ENCODE measurements at regions of chr11 and their contacts with region 1.

Region 1: DNA sequence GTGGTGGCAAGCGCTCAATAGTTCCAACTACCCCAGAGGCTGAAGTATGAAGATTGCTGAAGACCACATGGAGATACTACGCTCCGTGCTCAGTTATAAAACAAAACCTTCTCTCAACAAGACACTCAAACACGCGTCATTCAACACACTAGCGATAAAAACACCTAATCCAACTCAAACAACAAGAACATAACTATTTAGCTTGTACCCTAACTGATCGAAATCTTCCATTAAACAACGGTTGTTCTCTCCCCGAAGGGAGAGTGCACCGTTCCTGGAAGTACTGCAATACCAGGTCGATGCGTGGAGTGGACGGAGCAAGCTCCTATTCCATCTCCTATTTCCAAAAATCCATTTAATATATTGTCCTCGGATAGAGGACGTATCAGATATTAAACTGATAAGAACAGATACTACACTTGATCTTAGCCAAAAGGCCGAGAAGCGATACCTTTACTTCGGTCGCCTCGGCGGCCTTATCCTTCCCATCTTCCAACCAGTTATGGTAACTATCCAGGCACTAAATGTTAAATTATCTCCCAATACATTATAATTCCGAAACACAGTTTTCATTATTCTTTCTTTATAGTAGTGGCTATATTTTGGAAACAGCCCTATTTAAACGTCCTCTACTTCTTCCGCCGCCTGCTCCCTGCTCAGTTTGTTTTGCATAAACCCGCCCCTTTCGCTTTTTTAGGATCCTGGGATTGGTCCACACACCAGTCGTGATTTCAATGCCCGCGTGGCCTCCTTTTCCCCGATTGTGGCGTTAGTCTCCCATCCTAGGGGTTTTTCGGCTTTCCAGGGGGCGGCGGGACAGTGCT is 2.2 kb upstream of the WDR74 start:
- DNase-seq: peak; percentile 81 to 96 (median 88)
- ATAC-seq: peak; percentile 89
- H3K4me3 ChIP-seq: peak overlapping the region; percentile 33
- H3K27ac ChIP-seq: peak overlapping the region; percentile 89
- H3K4me1 ChIP-seq: peaks cover 8 to 19% of the 10 kb centered on the region in 2 experiments; a peak in 3 of 5 replicates
- H3K27me3 ChIP-seq: no peaks in the 10 kb centered on the region
- CTCF ChIP-seq: 0 out of 6 replicates have a peak, but pooled peaks of 2 of the 3 experiments have one; percentile 3 to 10
- EP300 ChIP-seq: peak; percentile 82
- POLR2A ChIP-seq: peak; percentile 100
- RAD21 ChIP-seq: peak; percentile 33 to 74; a peak in 3 of 4 replicates

Region 2: GRCh38 chr11:62394825-62395538 is 446.6 kb before region 1 on chr11:
- CTCF ChIA-PET with region 1: no interaction called
- POLR2A ChIA-PET with region 1: interaction called, 11 read pairs
- in situ Hi-C with region 1: no loop called
- intact Hi-C with region 1: loop called (anchors 5 kb)
- DNase-seq: peak; percentile 57 to 90 (median 66)
- ATAC-seq: peak; percentile 74
- H3K4me3 ChIP-seq: no peak overlapping the region
- H3K27ac ChIP-seq: no peak overlapping the region
- H3K4me1 ChIP-seq: peaks cover 55 to 66% of the 10 kb centered on the region in 2 experiments
- H3K27me3 ChIP-seq: no peaks in the 10 kb centered on the region
- CTCF ChIP-seq: peak; percentile 74 to 89 (median 86)
- EP300 ChIP-seq: no peak
- POLR2A ChIP-seq: no peak
- RAD21 ChIP-seq: peak; percentile 86 to 94

Region 3: DNA sequence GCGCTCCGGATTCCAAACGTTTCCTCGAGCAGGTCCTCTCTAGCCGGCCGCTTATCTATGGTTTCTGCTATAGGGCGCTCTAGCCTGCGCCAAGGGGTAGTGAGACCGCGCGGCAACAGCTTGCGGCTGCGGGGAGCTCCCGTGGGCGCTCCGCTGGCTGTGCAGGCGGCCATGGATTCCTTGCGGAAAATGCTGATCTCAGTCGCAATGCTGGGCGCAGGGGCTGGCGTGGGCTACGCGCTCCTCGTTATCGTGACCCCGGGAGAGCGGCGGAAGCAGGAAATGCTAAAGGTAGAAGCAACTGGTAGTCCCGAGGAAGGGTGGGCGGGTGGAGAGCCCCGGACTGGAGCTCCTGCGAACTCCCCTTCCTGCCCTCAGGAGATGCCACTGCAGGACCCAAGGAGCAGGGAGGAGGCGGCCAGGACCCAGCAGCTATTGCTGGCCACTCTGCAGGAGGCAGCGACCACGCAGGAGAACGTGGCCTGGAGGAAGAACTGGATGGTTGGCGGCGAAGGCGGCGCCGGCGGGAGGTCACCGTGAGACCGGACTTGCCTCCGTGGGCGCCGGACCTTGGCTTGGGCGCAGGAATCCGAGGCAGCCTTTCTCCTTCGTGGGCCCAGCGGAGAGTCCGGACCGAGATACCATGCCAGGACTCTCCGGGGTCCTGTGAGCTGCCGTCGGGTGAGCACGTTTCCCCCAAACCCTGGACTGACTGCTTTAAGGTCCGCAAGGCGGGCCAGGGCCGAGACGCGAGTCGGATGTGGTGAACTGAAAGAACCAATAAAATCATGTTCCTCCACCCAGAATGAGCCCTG is 169.8 kb before region 1 on chr11 and contains the starts of genes LBHD1 and UQCC3:
- CTCF ChIA-PET with region 1: no interaction called
- POLR2A ChIA-PET with region 1: interaction called, 13 read pairs
- in situ Hi-C with region 1: no loop called
- intact Hi-C with region 1: loop called (anchors 5 kb)
- DNase-seq: peak; percentile 66 to 96 (median 74)
- ATAC-seq: peak; percentile 72
- H3K4me3 ChIP-seq: peak within 1 kb of the TSS; percentile 91
- H3K27ac ChIP-seq: peak within 1 kb of the TSS; percentile 94
- H3K4me1 ChIP-seq: peaks cover 34 to 57% of the 10 kb centered on the region in 2 experiments; a peak in 4 of 5 replicates
- H3K27me3 ChIP-seq: no peaks in the 10 kb centered on the region
- CTCF ChIP-seq: no peak
- EP300 ChIP-seq: peak; percentile 53; the same call in 1 of the 2 replicates
- POLR2A ChIP-seq: peak; percentile 92
- RAD21 ChIP-seq: no peak
- polyA plus RNA-seq, gene LBHD1: 2.6 to 6.9 TPM
- polyA plus RNA-seq, gene UQCC3: 4.8 to 7.6 TPM

Region 4: DNA sequence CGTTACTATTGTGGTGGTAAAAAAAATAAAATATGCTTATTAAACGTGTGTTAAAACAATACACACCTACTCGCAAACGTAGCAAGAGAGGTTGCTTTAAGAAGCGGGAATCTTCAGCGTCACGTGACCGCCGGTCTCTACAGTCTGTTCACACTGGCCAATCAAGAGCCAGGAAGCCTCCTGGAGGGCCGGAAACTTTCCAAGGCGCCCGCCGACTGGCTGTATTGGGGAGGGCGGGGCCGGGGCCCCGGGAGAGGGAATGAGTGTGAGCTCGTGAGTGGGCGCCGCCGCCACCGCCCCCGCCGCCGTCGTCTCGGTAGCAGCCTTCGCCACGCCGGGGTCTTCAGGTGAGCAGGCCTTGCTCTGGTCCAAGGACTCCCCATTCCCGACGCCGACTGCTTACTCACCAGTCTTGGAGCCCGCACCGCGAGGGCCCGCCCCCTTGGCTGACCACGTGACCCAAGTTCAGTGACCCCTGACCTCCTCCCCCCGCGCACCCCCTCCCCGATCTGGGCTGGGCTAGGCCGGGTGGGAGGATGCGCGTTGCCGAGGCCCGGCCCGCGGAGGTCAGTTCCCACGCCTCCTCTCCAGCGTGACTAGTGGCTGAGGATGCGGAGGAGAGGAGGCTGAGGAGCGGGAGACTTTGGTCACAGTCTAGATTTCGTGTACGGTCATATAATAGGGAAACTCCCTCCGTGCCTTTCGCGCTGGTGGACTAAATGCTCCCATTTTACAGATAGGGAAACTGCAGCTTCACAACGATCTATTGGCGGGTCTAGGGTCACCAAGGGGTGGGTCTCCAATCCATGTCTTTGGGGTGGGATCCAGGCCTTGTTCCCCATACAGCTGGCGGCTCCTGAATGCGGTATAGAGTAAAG is 70.2 kb before region 1 on chr11 and contains the start of gene TAF6L:
- CTCF ChIA-PET with region 1: no interaction called
- POLR2A ChIA-PET with region 1: interaction called, 11 read pairs
- in situ Hi-C with region 1: no loop called
- intact Hi-C with region 1: no loop called
- DNase-seq: peak; percentile 97 to 99 (median 98)
- ATAC-seq: peak; percentile 95
- H3K4me3 ChIP-seq: peak within 1 kb of the TSS; percentile 48
- H3K27ac ChIP-seq: peak within 1 kb of the TSS; percentile 88
- H3K4me1 ChIP-seq: peaks cover 9 to 24% of the 10 kb centered on the region in 2 experiments
- H3K27me3 ChIP-seq: no peaks in the 10 kb centered on the region
- CTCF ChIP-seq: no peak; a peak in 1 of 6 replicates
- EP300 ChIP-seq: no peak; the same call in 1 of the 2 replicates
- POLR2A ChIP-seq: peak; percentile 86
- RAD21 ChIP-seq: peak in 1 of 2 experiments; percentile 20; a peak in 2 of 4 replicates
- polyA plus RNA-seq, gene TAF6L: 0.04 to 0.25 TPM

Region 5: DNA sequence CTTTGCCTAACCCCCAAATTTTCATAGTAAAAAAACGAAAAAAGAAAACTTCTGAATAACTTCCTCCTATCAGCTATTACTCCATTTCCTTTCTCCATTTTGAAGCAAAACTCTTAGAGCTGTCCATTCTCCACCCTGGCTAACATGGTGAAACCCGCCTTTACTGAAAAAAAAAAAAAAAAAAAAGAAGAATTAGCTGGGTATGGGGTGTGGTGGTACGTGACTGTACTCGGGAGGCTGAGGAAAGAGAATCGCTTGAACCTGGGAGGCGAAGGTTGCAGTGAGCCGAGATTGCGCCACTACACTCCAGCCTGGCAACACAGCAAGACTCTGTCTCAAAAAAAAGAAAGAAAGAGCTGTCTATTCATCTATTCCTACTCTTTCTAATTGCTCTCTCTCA is 25.0 kb before region 1 on chr11:
- CTCF ChIA-PET with region 1: no interaction called
- POLR2A ChIA-PET with region 1: interaction called, 15 read pairs
- in situ Hi-C with region 1: no loop called
- intact Hi-C with region 1: no loop called
- DNase-seq: no peak
- ATAC-seq: no peak
- H3K4me3 ChIP-seq: no peak overlapping the region
- H3K27ac ChIP-seq: no peak overlapping the region
- H3K4me1 ChIP-seq: no peaks in the 10 kb centered on the region; a peak in 2 of 5 replicates
- H3K27me3 ChIP-seq: no peaks in the 10 kb centered on the region
- CTCF ChIP-seq: no peak
- EP300 ChIP-seq: no peak
- POLR2A ChIP-seq: no peak
- RAD21 ChIP-seq: no peak

Region 6: DNA sequence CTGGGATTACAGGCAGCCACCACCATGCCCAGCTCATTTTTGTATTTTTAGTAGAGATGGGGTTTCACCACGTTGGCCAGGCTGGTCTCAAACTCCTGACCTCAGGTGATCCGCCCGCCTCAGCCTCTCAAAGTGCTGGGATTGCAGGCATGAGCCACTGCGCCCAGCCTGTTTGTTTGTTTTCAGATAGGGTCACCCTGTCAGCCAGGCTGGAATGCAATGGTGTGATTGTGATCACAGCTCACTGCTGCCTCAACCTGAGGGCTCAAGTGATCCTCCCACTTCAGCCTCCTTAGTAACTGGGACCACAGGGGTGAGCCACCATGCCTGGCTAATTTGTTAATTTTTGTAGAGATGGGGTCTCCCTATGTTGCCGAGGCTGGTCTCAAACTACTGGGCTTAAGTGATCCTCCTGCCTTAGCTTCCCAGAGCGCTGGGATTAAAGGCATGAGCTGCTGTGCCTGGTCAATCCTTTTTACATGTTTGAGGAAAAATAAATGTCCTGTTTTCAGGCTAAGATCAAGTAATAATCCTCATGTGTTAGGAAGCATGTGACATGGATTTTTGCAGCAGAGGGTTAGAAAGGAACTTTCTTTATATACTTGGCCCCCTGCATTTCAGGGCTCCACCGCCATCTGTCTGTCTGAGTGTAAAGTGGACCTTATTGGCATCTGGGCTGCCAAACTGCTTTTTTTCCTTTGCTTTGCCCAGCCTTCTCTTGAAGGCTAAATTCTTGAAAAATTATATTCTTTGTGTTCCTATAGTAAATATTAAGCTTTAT is 34.3 kb after region 1 on chr11:
- CTCF ChIA-PET with region 1: no interaction called
- POLR2A ChIA-PET with region 1: interaction called, 74 read pairs
- in situ Hi-C with region 1: no loop called
- intact Hi-C with region 1: loop called (anchors 1 kb)
- DNase-seq: no peak
- ATAC-seq: no peak
- H3K4me3 ChIP-seq: no peak overlapping the region
- H3K27ac ChIP-seq: peak overlapping the region; percentile 50; the same call in 1 of the 3 replicates
- H3K4me1 ChIP-seq: peaks cover 32 to 36% of the 10 kb centered on the region in 2 experiments
- H3K27me3 ChIP-seq: no peaks in the 10 kb centered on the region
- CTCF ChIP-seq: peak in 1 of 3 experiments; percentile 17; a peak in 1 of 6 replicates
- EP300 ChIP-seq: no peak
- POLR2A ChIP-seq: no peak
- RAD21 ChIP-seq: no peak

Measured in K562 (cell line).